Posterior vena cava (tissue), 2 donors: ENCODE measurements at regions of chr1 and their contacts with region 1.

Region 1: DNA sequence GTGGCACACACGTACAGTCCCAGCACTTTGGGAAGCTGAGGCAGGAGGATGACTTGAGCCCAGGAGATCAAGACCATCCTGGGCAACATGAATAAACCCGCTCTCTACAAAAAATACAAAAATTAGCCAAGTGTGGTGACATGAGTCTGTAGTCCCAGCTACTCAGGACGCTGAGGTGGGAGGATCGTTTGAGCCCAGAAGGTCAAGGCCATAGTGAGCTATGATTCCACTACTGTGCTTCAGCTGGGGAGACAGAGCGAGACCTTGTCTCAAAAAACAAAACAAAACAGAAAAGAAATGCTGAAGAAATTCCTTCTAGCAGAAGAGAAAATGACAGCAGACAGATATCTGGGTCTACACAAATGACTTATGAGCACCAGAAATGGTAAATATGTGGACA is 10.3 kb downstream of the ALDH9A1 start:
- DNase-seq: no peak

Region 2: GRCh38 chr1:165753934-165754333 is 65.9 kb after region 1 on chr1:
- intact Hi-C with region 1: loop called in 1 of 2 experiments (anchors 2 kb)
- DNase-seq: no peak